ENCODE measurements at regions of chr5 and their contacts with region 1.

Region 1: GRCh38 chr5:40755407-40756365 is at the start of gene TTC33:
- DNase-seq: peak; percentile 94
- H3K4me3 ChIP-seq: peak within 1 kb of the TSS; percentile 55 to 92 (median 86)
- H3K27ac ChIP-seq: peak within 1 kb of the TSS; percentile 75
- H3K4me1 ChIP-seq: peaks cover 10% of the 10 kb centered on the region
- H3K27me3 ChIP-seq: no peaks in the 10 kb centered on the region
- CTCF ChIP-seq: peak; percentile 72 to 83
- POLR2A ChIP-seq: peak; percentile 20
- total RNA-seq, gene TTC33: 11.7 and 14.2 TPM in 2 replicates

Region 2: DNA sequence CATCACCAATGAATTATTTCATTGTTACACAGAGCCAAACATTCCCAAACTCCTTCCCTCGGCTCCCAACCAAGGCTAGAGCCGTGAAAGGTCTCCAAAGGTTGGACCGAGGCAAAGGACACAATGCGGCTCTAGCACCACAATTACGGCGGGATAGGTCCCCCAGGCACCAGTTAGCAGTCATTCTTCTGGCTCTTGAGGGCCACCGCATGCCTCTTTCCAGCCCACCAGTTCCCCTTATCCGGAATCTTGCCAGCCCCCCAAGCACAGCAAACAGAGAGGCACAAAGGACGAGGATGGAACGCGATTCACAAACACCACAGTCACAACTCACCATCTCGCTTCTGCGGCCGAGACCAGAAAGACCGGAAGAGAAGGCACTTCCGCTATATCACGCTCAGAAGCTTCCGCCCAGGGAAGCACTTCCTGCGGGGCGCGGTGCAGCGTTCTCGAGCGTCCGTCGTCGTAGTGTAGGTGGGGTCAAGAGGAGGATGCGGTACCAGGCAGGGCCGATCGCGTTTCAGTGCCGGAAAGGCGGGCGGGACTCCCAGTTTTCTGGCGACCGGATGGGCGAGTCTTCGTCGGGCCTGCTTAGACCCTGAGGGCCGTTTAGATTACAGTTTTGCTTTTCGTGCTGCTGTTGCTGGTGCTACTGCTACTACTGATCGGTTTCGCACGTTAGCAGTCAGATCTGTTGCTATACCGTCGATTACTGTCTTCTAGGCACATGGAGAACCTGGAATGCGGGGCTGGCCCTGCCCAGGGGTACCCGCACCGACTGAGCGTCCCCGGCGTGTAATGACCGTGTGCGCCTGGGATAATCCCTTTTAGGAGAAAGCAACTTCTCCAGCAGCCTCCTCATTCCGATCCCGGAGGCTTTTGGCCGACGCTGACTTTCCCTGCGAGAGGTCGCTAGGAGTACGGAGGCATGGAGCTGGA is 79.4 kb after region 1 on chr5 and contains the start of gene RPL37:
- CTCF ChIA-PET with region 1: no interaction called
- POLR2A ChIA-PET with region 1: no interaction called
- dilution Hi-C with region 1: no loop called
- intact Hi-C with region 1: loop called (anchors 1 kb)
- DNase-seq: peak; percentile 94
- H3K4me3 ChIP-seq: peak within 1 kb of the TSS; percentile 44 to 90 (median 66)
- H3K27ac ChIP-seq: peak within 1 kb of the TSS; percentile 71
- H3K4me1 ChIP-seq: peaks cover 28% of the 10 kb centered on the region
- H3K27me3 ChIP-seq: no peaks in the 10 kb centered on the region
- CTCF ChIP-seq: no peak
- POLR2A ChIP-seq: peak; percentile 99
- total RNA-seq, gene RPL37: 1,348 and 1,380 TPM in 2 replicates

Region 3: GRCh38 chr5:40853632-40854192 is 98.0 kb after region 1 on chr5:
- CTCF ChIA-PET with region 1: no interaction called
- POLR2A ChIA-PET with region 1: no interaction called
- dilution Hi-C with region 1: no loop called
- intact Hi-C with region 1: no loop called
- DNase-seq: no peak
- H3K4me3 ChIP-seq: no peak overlapping the region
- H3K27ac ChIP-seq: no peak overlapping the region
- H3K4me1 ChIP-seq: no peaks in the 10 kb centered on the region
- H3K27me3 ChIP-seq: no peaks in the 10 kb centered on the region
- CTCF ChIP-seq: no peak
- POLR2A ChIP-seq: no peak